CD4-positive, alpha-beta memory T cell (primary cell): ENCODE measurements at regions of chr20 and their contacts with region 1.

Region 1: GRCh38 chr20:44683263-44684046 is 31.7 kb upstream of the CCN5 start:
- DNase-seq: peak; percentile 45 to 68 (median 53)
- H3K4me3 ChIP-seq: no peak overlapping the region
- H3K4me3 Mint-ChIP-seq: no peak overlapping the region
- H3K27ac ChIP-seq: no peak overlapping the region
- H3K27ac Mint-ChIP-seq: peak overlapping the region in 2 of 7 donors; percentile 2 to 10
- H3K4me1 ChIP-seq: peaks cover 8% of the 10 kb centered on the region
- H3K4me1 Mint-ChIP-seq: peaks cover 0 to 15% (median 7%) of the 10 kb centered on the region in 4 donors
- H3K27me3 ChIP-seq: no peaks in the 10 kb centered on the region
- H3K27me3 Mint-ChIP-seq: peaks cover 4 to 8% of the 10 kb centered on the region in 2 donors

Region 2: DNA sequence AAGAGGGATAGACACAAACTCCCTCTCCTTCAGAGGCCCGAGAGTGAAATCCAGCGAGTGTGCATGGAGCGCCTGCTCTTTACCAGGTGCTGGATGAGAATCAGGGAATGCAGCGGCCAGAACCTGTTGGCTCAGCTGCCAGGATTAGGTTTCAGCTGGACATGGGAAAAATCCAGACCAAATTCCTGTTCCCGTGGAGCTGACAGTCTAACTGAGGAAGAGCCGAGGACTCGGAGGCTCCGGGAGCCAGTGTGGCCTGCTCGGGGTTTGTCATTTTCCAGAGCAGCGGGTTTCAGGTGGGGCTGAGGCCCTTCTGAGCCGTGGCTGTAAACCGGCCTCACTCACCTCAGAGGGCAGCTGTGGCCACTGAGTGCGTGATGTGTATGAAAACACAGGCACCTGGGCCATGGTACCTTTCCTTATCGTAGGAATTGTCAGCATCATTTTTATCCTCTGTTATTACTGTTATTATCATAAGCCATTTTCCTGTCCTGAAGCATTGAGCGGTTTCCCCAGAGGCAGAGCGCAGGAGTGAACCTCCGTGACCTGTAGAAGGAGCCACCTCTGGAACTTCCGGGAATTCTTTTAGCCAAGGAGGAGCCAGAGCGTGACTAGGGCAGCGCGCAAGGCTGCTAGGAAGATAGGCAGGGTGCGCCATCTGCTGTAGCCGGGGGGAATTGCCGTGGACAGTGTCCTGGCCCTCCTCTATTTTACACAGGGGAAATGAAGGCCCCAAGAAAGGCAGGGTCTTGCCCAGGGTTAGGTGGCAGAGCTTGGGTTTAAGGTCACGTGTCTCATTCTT is 73.7 kb before region 1 on chr20:
- CTCF ChIA-PET with region 1: interaction called, 52 read pairs
- POLR2A ChIA-PET with region 1: interaction called, 3 read pairs
- intact Hi-C with region 1: no loop called
- DNase-seq: peak; percentile 65 to 80 (median 74)
- H3K4me3 ChIP-seq: no peak overlapping the region
- H3K4me3 Mint-ChIP-seq: peak overlapping the region in 6 of 8 donors; percentile 62 to 77 (median 66)
- H3K27ac ChIP-seq: peak overlapping the region; percentile 23
- H3K27ac Mint-ChIP-seq: peak overlapping the region; percentile 17 to 98 (median 85)
- H3K4me1 ChIP-seq: peaks cover 12% of the 10 kb centered on the region
- H3K4me1 Mint-ChIP-seq: peaks cover 5 to 19% (median 12%) of the 10 kb centered on the region in 4 donors
- H3K27me3 ChIP-seq: no peaks in the 10 kb centered on the region
- H3K27me3 Mint-ChIP-seq: no peaks in the 10 kb centered on the region

Region 3: GRCh38 chr20:44637042-44637441 is 46.4 kb before region 1 on chr20:
- CTCF ChIA-PET with region 1: interaction called, 28 read pairs
- POLR2A ChIA-PET with region 1: interaction called, 17 read pairs
- intact Hi-C with region 1: loop called (anchors 2 kb)
- DNase-seq: no peak
- H3K4me3 ChIP-seq: no peak overlapping the region
- H3K4me3 Mint-ChIP-seq: no peak overlapping the region
- H3K27ac ChIP-seq: no peak overlapping the region
- H3K27ac Mint-ChIP-seq: peak overlapping the region in 2 of 7 donors; percentile 36 to 48
- H3K4me1 ChIP-seq: peaks cover 14% of the 10 kb centered on the region
- H3K4me1 Mint-ChIP-seq: peaks cover 11 to 30% (median 19%) of the 10 kb centered on the region in 4 donors
- H3K27me3 ChIP-seq: no peaks in the 10 kb centered on the region
- H3K27me3 Mint-ChIP-seq: no peaks in the 10 kb centered on the region

Region 4: DNA sequence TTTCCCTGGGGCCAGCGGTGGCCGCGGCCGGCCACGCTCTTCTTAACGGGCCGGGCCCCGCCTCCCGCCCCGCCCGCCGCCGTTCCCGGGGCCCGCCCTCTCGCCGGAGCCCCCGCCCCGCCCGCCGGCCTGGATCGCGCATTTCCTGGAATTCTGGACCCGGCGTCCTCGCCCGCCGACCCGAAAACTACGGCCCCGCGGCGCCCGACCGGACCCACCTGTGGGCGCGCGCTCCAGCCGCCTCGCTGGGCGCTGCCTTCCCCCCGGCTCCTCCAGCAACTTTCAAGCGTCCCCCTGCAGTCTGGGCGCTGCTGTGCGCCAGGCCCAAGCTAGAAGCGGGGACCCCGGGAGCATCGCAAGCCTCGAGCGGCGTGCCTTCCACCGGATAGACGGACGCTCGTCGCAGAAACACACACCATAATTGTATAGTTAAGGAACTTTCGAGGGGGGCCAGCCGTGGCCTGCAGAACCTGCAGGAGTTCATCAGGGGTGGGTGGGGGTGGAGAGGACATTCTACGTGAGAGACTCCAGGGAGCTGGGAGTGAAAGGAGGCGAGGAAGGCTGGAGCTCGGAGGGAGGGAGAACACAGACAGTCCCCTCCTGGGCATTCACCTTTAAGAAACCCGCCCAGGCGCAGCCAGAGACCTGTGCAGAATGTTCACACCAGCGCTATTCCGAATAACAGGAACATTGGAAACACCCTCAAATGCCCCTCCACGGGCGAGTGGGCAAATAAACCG is 31.6 kb before region 1 on chr20 and contains the start of gene ADA:
- CTCF ChIA-PET with region 1: interaction called, 83 read pairs
- POLR2A ChIA-PET with region 1: interaction called, 21 read pairs
- intact Hi-C with region 1: no loop called
- DNase-seq: peak; percentile 39 to 57 (median 43)
- H3K4me3 ChIP-seq: peak within 1 kb of the TSS; percentile 76 to 81
- H3K4me3 Mint-ChIP-seq: peak within 1 kb of the TSS; percentile 91 to 98 (median 93)
- H3K27ac ChIP-seq: peak within 1 kb of the TSS; percentile 72
- H3K27ac Mint-ChIP-seq: peak within 1 kb of the TSS; percentile 91 to 97 (median 95)
- H3K4me1 ChIP-seq: peaks cover 52% of the 10 kb centered on the region
- H3K4me1 Mint-ChIP-seq: peaks cover 25 to 58% (median 47%) of the 10 kb centered on the region in 4 donors
- H3K27me3 ChIP-seq: no peaks in the 10 kb centered on the region
- H3K27me3 Mint-ChIP-seq: no peaks in the 10 kb centered on the region
- total RNA-seq, gene ADA: 28.4 to 31.0 TPM

Region 5: DNA sequence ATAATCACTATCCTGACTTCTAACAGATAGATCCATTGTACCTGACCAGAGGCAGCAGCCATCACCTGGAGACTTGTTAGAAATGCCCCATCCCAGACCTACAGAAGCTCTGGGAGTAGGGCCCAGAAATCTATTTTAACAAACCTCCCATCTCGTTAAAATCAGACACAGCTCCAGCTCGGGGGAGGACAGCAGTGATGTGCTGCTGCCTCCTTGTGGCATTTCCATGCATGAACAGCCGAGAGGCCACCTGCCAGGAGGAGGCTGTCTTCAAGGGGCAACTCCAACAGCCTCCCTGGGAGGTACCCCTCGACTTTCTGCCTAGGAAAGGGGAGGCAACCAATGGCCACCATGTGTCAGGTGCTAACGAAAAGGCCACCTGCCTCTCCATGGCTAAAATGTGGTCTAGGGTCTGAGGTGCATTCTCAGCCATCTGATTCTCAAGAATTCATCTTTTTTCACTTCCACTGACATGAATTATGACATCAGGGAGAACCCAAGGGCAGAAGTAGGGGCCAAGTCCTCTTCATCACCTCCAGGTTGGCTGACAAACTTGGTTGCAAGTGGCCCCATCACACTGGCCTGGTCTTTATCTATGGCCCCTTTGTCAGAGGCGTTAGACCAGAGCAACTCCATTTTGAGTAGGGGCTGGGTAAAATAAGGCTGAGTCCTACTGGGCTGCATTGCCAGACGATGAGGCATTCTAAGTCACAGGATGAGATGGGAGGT is 50.0 kb after region 1 on chr20:
- CTCF ChIA-PET with region 1: interaction called, 5 read pairs
- POLR2A ChIA-PET with region 1: no interaction called
- intact Hi-C with region 1: loop called (anchors 1 kb)
- DNase-seq: peak in 4 of 5 donors; percentile 45 to 58 (median 50)
- H3K4me3 ChIP-seq: no peak overlapping the region
- H3K4me3 Mint-ChIP-seq: no peak overlapping the region
- H3K27ac ChIP-seq: no peak overlapping the region
- H3K27ac Mint-ChIP-seq: peak overlapping the region in 1 of 7 donors; percentile 21
- H3K4me1 ChIP-seq: no peaks in the 10 kb centered on the region
- H3K4me1 Mint-ChIP-seq: peaks cover 7 to 23% (median 18%) of the 10 kb centered on the region in 4 donors
- H3K27me3 ChIP-seq: no peaks in the 10 kb centered on the region
- H3K27me3 Mint-ChIP-seq: no peaks in the 10 kb centered on the region

Region 6: GRCh38 chr20:45070932-45071632 is 387.6 kb after region 1 on chr20:
- CTCF ChIA-PET with region 1: no interaction called
- POLR2A ChIA-PET with region 1: no interaction called
- intact Hi-C with region 1: no loop called
- DNase-seq: no peak
- H3K4me3 ChIP-seq: no peak overlapping the region
- H3K4me3 Mint-ChIP-seq: no peak overlapping the region
- H3K27ac ChIP-seq: no peak overlapping the region
- H3K27ac Mint-ChIP-seq: peak overlapping the region in 6 of 7 donors; percentile 32 to 75 (median 58)
- H3K4me1 ChIP-seq: peaks cover 35% of the 10 kb centered on the region
- H3K4me1 Mint-ChIP-seq: peaks cover 37 to 73% (median 54%) of the 10 kb centered on the region in 4 donors
- H3K27me3 ChIP-seq: no peaks in the 10 kb centered on the region
- H3K27me3 Mint-ChIP-seq: no peaks in the 10 kb centered on the region

Region 7: GRCh38 chr20:45293041-45294002 is 609.9 kb after region 1 on chr20:
- CTCF ChIA-PET with region 1: interaction called, 28 read pairs
- POLR2A ChIA-PET with region 1: no interaction called
- intact Hi-C with region 1: loop called (anchors 5 kb)
- DNase-seq: peak; percentile 70 to 77 (median 71)
- H3K4me3 ChIP-seq: peak overlapping the region; percentile 40 to 64
- H3K4me3 Mint-ChIP-seq: peak overlapping the region; percentile 68 to 84 (median 79)
- H3K27ac ChIP-seq: no peak overlapping the region
- H3K27ac Mint-ChIP-seq: no peak overlapping the region
- H3K4me1 ChIP-seq: peaks cover 11% of the 10 kb centered on the region
- H3K4me1 Mint-ChIP-seq: peaks cover 2 to 8% (median 4%) of the 10 kb centered on the region in 4 donors
- H3K27me3 ChIP-seq: no peaks in the 10 kb centered on the region
- H3K27me3 Mint-ChIP-seq: peaks cover 9 to 30% of the 10 kb centered on the region in 2 donors